Colonic mucosa (tissue), 4 donors: ENCODE measurements at regions of chr16 and their contacts with region 1.

Region 1: DNA sequence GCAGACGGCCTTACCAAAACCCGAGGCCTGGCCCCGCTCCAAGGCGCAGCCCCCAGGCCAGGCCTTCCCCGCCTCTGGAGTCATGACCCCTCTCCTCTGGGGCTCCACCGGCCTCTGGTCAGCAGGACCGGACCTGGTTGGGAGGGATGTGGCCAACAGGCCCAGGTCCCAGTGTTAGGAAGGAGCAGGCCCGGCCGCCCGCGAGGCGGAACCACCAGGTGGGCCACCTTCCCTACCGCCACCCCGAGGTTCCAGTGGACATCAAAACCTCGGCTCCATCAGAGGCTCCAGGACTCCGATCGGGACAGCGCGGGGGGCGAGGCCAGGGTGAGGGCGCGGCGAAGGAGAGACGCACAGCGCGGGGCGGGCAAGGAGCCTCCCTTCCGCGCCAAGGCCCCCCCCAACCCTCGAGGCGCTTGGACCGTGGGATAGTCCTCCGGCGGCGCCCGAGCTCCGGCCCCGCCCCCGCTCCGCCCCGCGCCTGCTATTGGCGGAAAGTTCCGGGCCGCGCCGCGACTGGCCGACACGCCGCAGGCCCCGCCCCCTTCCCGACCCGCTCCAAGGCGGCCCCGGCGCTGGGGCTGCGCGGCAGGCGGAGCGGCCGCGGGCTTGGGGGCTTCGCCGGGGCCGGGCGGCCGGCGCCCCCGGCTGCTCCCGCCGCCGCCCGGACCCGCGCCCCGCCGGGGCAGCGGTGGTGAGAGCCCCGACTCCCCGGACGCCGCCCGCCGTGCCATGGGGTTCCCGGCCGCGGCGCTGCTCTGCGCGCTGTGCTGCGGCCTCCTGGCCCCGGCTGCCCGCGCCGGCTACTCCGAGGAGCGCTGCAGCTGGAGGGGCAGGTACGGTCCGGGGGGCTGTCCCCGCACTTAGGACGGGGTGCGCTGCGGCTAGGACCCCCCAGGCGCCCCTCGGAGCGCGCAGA is at the start of gene METRN:
- DNase-seq: peak; percentile 92
- H3K4me3 ChIP-seq: peak within 1 kb of the TSS; percentile 70
- H3K27ac ChIP-seq: no peak within 1 kb of the TSS
- H3K4me1 ChIP-seq: peaks cover 26% of the 10 kb centered on the region
- H3K27me3 ChIP-seq: peaks cover 17% of the 10 kb centered on the region
- CTCF ChIP-seq: no peak
- total RNA-seq, gene METRN: 23.3 to 50.0 TPM

Region 2: DNA sequence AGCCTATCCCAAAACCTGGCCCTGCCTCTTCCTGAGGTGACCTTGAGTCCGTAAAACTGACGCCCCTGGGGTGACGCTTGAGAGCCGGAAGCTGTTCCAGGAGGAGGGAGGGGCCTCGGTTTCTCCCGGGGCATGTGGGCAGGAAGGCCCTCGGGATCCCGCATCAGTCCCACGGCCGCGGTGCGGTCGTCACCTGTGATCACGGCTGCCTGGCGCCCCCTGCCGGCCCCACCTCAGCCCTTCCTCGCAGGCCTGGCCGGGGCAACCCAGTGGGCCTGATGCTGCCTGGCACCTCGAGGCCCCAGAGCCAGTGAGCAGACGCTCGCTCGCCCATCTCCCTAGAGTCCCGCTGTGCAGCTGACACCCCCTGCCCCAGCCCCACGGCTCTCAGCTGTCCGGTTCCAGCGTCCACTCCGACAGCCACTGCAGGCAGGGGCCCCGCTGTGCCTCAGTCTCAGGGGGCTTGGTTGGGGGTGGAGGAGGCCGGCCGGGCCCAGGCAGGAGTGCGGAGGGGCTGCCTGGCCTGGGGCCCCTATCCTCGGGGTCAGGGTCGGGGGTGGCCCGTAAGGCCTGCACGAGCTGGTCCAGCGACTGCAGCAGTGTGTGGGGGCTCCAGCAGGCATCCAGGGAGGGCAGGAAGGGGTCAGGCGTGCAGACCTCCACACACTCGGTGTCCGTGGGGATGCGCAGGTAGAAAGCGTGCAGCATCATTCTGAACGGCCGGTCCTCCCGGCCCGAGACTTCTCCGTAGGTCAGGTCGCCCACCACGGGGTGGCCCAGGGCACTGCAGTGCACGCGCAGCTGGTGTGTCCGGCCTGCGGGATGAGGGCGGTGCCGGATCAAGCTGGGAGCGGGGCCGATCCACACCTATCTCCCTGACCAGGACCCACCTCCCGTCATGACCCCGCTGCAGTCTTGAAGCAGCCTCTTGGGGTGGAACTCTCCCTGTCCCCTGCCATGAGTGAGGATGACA is 71.0 kb after region 1 on chr16:
- intact Hi-C with region 1: loop called (anchors 2 kb)
- DNase-seq: peak; percentile 75
- H3K4me3 ChIP-seq: no peak overlapping the region
- H3K27ac ChIP-seq: no peak overlapping the region
- H3K4me1 ChIP-seq: peaks cover 15% of the 10 kb centered on the region
- H3K27me3 ChIP-seq: peaks cover 15% of the 10 kb centered on the region
- CTCF ChIP-seq: peak; percentile 72